ENCODE measurements at regions of chr10 and their contacts with region 1.

Region 1: DNA sequence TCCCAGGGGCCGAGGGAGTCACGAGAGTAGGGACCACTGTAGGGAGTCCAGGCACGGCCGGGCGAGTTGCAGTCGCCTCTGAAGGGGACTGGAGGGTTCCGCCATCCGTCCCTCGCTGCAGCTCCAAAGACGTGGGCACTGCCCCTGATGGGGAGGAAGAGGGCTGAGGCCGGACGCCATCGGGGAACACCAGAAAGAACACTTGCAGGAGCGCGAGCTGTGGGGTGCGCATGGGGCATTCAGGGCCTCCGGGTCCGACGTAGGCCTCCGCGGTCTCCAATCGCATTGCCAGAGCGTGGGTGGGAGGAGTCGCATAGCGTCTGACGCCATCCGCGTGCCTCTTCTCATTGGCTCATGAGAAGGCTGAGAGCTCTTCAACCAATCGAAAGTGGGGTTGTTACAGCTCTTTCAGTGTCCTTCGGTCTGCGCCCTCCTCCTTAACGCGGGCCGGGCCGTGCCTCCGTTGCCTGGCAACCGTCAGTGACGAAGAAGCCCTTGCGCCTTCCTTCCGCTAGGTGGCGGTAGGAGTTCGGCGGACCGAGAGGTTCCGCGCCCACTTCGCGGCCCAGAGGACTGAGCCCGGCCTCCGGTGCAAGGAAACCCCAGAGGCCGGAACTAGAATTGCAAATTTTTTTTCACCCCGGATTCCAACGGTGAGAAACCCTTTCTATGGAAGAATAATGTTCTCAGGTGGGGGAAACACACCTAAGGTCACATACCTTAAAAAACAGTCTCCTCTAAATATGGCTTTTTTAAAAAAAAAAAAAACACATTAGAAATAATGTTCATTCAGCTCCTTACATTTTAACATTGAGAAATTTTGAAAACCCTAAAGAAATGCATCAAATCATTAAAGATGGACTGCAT is at the start of gene TCTN3:
- DNase-seq: peak; percentile 100
- ATAC-seq: peak; percentile 96
- H3K4me3 ChIP-seq: peak within 1 kb of the TSS; percentile 87
- H3K27ac ChIP-seq: peak within 1 kb of the TSS; percentile 79
- H3K4me1 ChIP-seq: peaks cover 13% of the 10 kb centered on the region
- H3K27me3 ChIP-seq: no peaks in the 10 kb centered on the region
- CTCF ChIP-seq: peak; percentile 97 to 100 (median 99); a peak in 5 of 6 replicates
- EP300 ChIP-seq: 0 out of 4 replicates have a peak, but pooled peaks of 1 of the 2 experiments have one; percentile 11
- POLR2A ChIP-seq: peak; percentile 89
- RAD21 ChIP-seq: peak; percentile 100
- polyA plus RNA-seq, gene TCTN3: 20.0 to 24.0 TPM

Region 2: DNA sequence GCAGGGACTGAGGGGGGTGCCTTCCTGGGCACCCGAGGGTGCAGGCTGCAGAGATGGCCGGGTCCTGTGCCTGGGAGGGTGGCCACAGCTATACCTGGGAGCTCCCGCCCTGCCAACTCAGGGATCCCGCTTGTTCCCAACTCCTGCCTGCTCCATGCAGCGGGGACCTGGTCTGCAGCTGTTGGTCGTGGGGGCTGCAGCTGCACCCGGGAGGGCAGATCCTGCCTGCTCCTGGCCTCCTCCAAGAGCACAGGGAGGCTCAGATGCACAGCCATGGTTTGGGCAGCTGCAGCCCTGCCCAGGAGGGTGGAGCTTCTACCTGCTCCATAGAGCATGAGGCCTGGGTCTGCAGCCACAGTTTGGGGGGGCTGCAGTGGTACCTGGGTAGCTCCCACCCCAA is 13.1 kb after region 1 on chr10:
- CTCF ChIA-PET with region 1: interaction called, 10 read pairs
- POLR2A ChIA-PET with region 1: no interaction called
- RAD21 ChIA-PET with region 1: interaction called, 10 read pairs
- SMC1A ChIA-PET with region 1: interaction called, 7 read pairs
- in situ Hi-C with region 1: no loop called
- intact Hi-C with region 1: no loop called
- DNase-seq: no peak
- ATAC-seq: no peak
- H3K4me3 ChIP-seq: no peak overlapping the region
- H3K27ac ChIP-seq: no peak overlapping the region
- H3K4me1 ChIP-seq: 0 out of 2 replicates have a peak, but pooled peaks cover 4% of the 10 kb centered on the region
- H3K27me3 ChIP-seq: no peaks in the 10 kb centered on the region
- CTCF ChIP-seq: no peak
- EP300 ChIP-seq: no peak
- POLR2A ChIP-seq: no peak
- RAD21 ChIP-seq: no peak

Region 3: DNA sequence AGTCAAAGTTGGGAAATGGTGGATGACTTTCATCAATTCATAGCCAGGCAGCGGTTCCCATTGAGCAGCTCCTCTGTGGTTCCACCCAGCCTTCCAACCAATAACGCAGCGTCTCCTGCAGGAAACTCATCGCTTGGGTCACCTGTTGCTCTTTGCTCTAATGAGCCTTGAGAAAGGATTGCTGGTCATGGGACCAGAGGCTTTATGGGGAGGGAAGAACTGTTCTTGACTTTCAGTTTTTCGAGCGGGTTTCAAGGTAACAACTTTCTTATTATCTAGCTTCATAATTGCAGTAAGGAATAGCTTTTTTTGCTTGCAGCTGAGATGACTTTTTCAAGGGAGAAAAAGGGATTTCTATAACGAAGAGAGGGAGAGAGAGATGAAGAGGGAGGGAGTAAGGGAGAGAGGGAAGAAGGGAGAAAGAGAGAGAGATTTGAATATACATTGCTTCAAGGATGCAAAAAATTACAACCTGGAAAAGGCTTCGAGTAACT is 61.7 kb after region 1 on chr10:
- CTCF ChIA-PET with region 1: interaction called, 112 read pairs
- POLR2A ChIA-PET with region 1: interaction called, 61 read pairs
- RAD21 ChIA-PET with region 1: interaction called, 133 read pairs
- SMC1A ChIA-PET with region 1: interaction called, 86 read pairs
- in situ Hi-C with region 1: no loop called
- intact Hi-C with region 1: loop called (anchors 1 kb)
- DNase-seq: peak; percentile 90
- ATAC-seq: peak; percentile 48
- H3K4me3 ChIP-seq: peak overlapping the region; percentile 94
- H3K27ac ChIP-seq: peak overlapping the region; percentile 96
- H3K4me1 ChIP-seq: peaks cover 15% of the 10 kb centered on the region; the same call in 1 of the 2 replicates
- H3K27me3 ChIP-seq: no peaks in the 10 kb centered on the region
- CTCF ChIP-seq: no peak; a peak in 1 of 6 replicates
- EP300 ChIP-seq: peak in 1 of 2 experiments; percentile 56; a peak in 1 of 4 replicates
- POLR2A ChIP-seq: peak; percentile 23; the same call in 1 of the 2 replicates
- RAD21 ChIP-seq: no peak

Region 4: DNA sequence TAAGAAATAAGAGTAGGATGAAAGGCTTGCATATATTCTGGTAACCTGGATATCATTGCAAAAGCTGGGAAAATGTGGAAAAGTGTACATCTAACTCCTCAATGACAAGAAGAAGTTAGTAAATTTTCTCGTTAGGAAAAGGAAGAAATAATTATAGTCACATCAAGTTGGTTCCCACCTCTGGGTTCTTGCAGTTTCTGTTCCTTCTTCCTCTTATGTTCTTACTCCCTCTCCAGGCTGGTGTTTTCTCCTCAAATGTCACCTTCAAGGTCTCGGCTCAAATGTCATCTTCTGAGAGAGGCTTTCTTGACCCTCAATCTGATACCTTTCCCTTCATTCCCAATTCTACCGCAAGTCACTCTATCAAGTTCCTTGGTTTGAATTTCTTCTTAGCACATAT is 126.5 kb after region 1 on chr10:
- CTCF ChIA-PET with region 1: interaction called, 20 read pairs
- POLR2A ChIA-PET with region 1: interaction called, 6 read pairs
- RAD21 ChIA-PET with region 1: interaction called, 53 read pairs
- SMC1A ChIA-PET with region 1: interaction called, 21 read pairs
- in situ Hi-C with region 1: no loop called
- intact Hi-C with region 1: no loop called
- DNase-seq: no peak
- ATAC-seq: peak; percentile 76
- H3K4me3 ChIP-seq: no peak overlapping the region
- H3K27ac ChIP-seq: peak overlapping the region; percentile 85
- H3K4me1 ChIP-seq: peaks cover 41% of the 10 kb centered on the region
- H3K27me3 ChIP-seq: no peaks in the 10 kb centered on the region
- CTCF ChIP-seq: peak in 1 of 3 experiments; percentile 35; a peak in 2 of 6 replicates
- EP300 ChIP-seq: peak in 1 of 2 experiments; percentile 60; a peak in 2 of 4 replicates
- POLR2A ChIP-seq: no peak
- RAD21 ChIP-seq: peak; percentile 51

Region 5: GRCh38 chr10:95864906-95865813 is 171.3 kb after region 1 on chr10:
- CTCF ChIA-PET with region 1: interaction called, 86 read pairs
- POLR2A ChIA-PET with region 1: interaction called, 26 read pairs
- RAD21 ChIA-PET with region 1: interaction called, 108 read pairs
- SMC1A ChIA-PET with region 1: interaction called, 52 read pairs
- in situ Hi-C with region 1: no loop called
- intact Hi-C with region 1: loop called (anchors 1 kb)
- DNase-seq: peak; percentile 42
- ATAC-seq: peak; percentile 91
- H3K4me3 ChIP-seq: no peak overlapping the region
- H3K27ac ChIP-seq: peak overlapping the region; percentile 40; the same call in 1 of the 2 replicates
- H3K4me1 ChIP-seq: peaks cover 9% of the 10 kb centered on the region; the same call in 1 of the 2 replicates
- H3K27me3 ChIP-seq: no peaks in the 10 kb centered on the region
- CTCF ChIP-seq: peak; percentile 66 to 77 (median 70); a peak in 5 of 6 replicates
- EP300 ChIP-seq: no peak
- POLR2A ChIP-seq: no peak
- RAD21 ChIP-seq: peak; percentile 80

Region 6: GRCh38 chr10:96017191-96017687 is 323.3 kb after region 1 on chr10:
- CTCF ChIA-PET with region 1: interaction called, 19 read pairs
- POLR2A ChIA-PET with region 1: no interaction called
- RAD21 ChIA-PET with region 1: interaction called, 22 read pairs
- SMC1A ChIA-PET with region 1: interaction called, 8 read pairs
- in situ Hi-C with region 1: no loop called
- intact Hi-C with region 1: no loop called
- DNase-seq: peak; percentile 32
- ATAC-seq: peak; percentile 99
- H3K4me3 ChIP-seq: no peak overlapping the region
- H3K27ac ChIP-seq: no peak overlapping the region
- H3K4me1 ChIP-seq: no peaks in the 10 kb centered on the region
- H3K27me3 ChIP-seq: no peaks in the 10 kb centered on the region
- CTCF ChIP-seq: peak; percentile 75 to 79 (median 77)
- EP300 ChIP-seq: no peak
- POLR2A ChIP-seq: no peak
- RAD21 ChIP-seq: peak; percentile 90